HepG2 (cell line): ENCODE measurements at regions of chr5 and their contacts with region 1.

Region 1: DNA sequence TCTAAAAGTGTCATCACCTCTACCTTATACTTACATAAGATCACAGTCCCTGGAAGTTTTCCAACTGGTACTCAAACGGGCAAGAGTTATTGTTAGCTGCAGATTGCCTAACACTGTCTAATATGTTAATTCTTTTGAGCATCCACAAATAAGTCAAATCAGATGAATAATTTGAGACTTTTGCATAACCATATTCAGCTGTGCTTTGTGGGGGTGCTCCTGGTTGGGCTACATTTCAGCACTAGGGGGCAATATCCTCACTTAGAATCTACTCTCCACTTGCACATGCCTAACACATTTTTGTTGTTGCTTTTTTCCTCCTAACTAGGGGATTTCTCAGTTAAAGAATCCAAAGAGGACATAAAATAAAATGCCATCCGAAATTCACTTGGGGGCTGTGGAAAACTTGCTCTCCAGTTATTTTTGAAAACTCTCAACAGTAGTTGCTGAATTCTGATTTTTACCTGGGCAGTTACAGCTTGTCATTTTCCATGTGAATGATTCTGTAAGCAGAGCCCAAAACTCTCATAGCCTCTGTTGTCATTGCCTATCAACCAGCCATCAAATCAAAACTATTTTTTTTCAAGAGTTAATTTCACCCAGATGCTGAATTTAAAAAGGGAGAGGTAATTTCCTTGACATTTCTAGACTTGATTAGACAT is 71.5 kb downstream of the TRIM36 start:
- DNase-seq: peak; percentile 32
- ATAC-seq: peak; percentile 93
- H3K4me3 ChIP-seq: no peak overlapping the region
- H3K27ac ChIP-seq: no peak overlapping the region
- H3K4me1 ChIP-seq: peaks cover 21% of the 10 kb centered on the region
- H3K27me3 ChIP-seq: peaks cover 0 to 20% of the 10 kb centered on the region in 2 experiments; a peak in 2 of 5 replicates
- CTCF ChIP-seq: peak; percentile 77
- EP300 ChIP-seq: no peak
- POLR2A ChIP-seq: no peak
- RAD21 ChIP-seq: 0 out of 2 replicates have a peak, but pooled peaks have one; percentile 45

Region 2: DNA sequence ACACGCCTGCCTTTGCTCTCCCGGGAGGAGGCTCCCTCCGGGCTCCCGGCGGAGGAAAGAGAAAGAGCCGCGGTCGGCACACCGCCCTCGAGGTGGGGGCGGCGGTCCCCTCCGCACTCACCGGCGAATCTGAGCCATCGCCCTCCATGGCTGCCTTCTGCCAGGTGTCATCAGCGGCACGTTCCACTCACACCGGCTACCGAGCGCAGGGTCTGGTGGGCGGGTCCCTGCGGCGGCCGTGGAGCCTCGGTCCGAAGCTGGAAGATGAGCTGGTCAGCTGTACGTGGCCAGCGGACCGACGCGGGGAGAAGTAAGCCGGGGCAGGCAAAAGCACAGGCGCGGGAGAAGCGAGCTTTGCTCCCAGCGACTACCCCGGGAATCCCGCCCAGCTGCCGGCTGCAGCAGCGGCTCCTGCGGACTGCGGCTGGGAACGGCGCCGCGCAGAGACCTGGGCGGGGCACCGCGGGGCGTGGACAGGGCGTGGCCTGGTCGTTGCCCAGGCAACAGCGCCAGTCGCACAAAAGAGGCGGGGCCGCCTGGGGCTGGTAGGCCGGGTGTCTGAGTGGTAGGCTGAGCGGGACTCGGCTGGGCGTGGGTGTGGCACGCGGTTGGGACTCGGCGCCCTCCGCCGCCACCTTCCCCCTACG is 71.4 kb after region 1 on chr5 and contains the start of gene TRIM36:
- CTCF ChIA-PET with region 1: no interaction called
- POLR2A ChIA-PET with region 1: no interaction called
- in situ Hi-C with region 1: no loop called
- intact Hi-C with region 1: loop called (anchors 1 kb)
- DNase-seq: peak; percentile 79
- ATAC-seq: peak; percentile 93
- H3K4me3 ChIP-seq: peak within 1 kb of the TSS; percentile 64 to 84 (median 83)
- H3K27ac ChIP-seq: no peak within 1 kb of the TSS
- H3K4me1 ChIP-seq: peaks cover 17% of the 10 kb centered on the region
- H3K27me3 ChIP-seq: peaks cover 0 to 13% of the 10 kb centered on the region in 2 experiments; a peak in 2 of 5 replicates
- CTCF ChIP-seq: peak; percentile 45
- EP300 ChIP-seq: no peak
- POLR2A ChIP-seq: peak; percentile 60 to 63; a peak in 3 of 4 replicates
- RAD21 ChIP-seq: peak; percentile 34; the same call in 1 of the 2 replicates
- total RNA-seq, gene TRIM36: 2.0 and 2.4 TPM in 2 replicates

Region 3: GRCh38 chr5:115246361-115246991 is 148.3 kb after region 1 on chr5:
- CTCF ChIA-PET with region 1: interaction called, 28 read pairs
- POLR2A ChIA-PET with region 1: no interaction called
- in situ Hi-C with region 1: loop called (anchors 5 kb)
- intact Hi-C with region 1: loop called (anchors 1 kb)
- DNase-seq: peak; percentile 49
- ATAC-seq: peak; percentile 76
- H3K4me3 ChIP-seq: no peak overlapping the region
- H3K27ac ChIP-seq: no peak overlapping the region
- H3K4me1 ChIP-seq: peaks cover 40% of the 10 kb centered on the region
- H3K27me3 ChIP-seq: no peaks in the 10 kb centered on the region
- CTCF ChIP-seq: peak; percentile 74
- EP300 ChIP-seq: no peak
- POLR2A ChIP-seq: no peak
- RAD21 ChIP-seq: peak; percentile 72